PC-9 (cell line): ENCODE measurements at regions of chr20 and their contacts with region 1.

Region 1: GRCh38 chr20:36861875-36862801 is 13.8 kb upstream of the TLDC2 start:
- DNase-seq: peak; percentile 38 to 80
- H3K4me3 ChIP-seq: no peak overlapping the region; the same call in 1 of the 2 replicates
- H3K27ac ChIP-seq: no peak overlapping the region
- H3K4me1 ChIP-seq: 0 out of 2 replicates have a peak, but pooled peaks cover 12% of the 10 kb centered on the region
- H3K27me3 ChIP-seq: no peaks in the 10 kb centered on the region
- CTCF ChIP-seq: no peak

Region 2: DNA sequence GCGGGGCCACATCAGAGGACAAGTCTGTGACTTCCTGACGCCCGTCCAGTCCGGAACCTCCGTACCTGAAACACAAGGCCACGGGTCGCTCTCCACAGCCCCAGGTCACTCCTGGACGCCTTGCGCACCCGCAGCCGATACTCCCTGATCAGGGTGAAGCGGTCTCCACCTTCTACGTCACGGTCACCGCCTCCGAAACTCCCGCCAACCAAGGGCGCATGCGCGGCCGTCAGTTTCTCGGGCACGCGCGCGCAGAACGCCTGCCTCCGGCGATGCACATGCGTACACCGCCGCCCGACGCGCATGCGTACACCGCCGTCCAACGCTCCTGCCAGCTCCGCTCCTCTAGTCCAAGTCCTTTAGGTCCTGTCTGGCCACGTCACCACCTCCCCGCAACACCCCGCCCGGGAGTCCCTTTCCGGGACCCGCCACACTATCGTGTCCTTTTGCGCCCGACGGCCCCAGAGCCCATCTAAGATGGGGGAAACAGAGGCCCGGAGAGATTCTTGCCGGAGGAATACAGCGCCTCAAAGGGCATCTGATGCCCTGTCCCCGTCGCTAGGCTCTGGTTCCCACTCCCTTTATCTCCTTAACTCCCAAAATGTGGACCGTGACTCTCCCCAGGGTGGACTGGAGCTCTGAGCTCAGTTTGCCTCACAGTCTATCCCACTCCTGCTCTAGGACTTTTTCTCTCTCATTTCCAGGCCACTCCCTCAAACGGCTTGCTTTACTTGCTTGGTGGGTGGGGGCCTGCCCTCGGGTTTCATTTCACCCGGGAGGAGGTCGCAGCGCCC is 88.3 kb before region 1 on chr20 and contains the start of gene DSN1:
- CTCF ChIA-PET with region 1: interaction called, 3 read pairs
- POLR2A ChIA-PET with region 1: no interaction called
- intact Hi-C with region 1: loop called (anchors 1 kb)
- DNase-seq: peak; percentile 91 to 99
- H3K4me3 ChIP-seq: peak within 1 kb of the TSS; percentile 70
- H3K27ac ChIP-seq: peak within 1 kb of the TSS; percentile 85
- H3K4me1 ChIP-seq: peaks cover 7% of the 10 kb centered on the region
- H3K27me3 ChIP-seq: no peaks in the 10 kb centered on the region
- CTCF ChIP-seq: peak; percentile 87
- total RNA-seq, gene DSN1: 29.2 and 32.4 TPM in 2 replicates

Region 3: GRCh38 chr20:36792422-36792821 is 69.7 kb before region 1 on chr20:
- CTCF ChIA-PET with region 1: interaction called, 3 read pairs
- POLR2A ChIA-PET with region 1: no interaction called
- intact Hi-C with region 1: loop called (anchors 1 kb)
- DNase-seq: peak; percentile 85 to 87
- H3K4me3 ChIP-seq: no peak overlapping the region
- H3K27ac ChIP-seq: no peak overlapping the region
- H3K4me1 ChIP-seq: no peaks in the 10 kb centered on the region
- H3K27me3 ChIP-seq: no peaks in the 10 kb centered on the region
- CTCF ChIP-seq: peak; percentile 66

Region 4: GRCh38 chr20:36821964-36822437 is 40.1 kb before region 1 on chr20:
- CTCF ChIA-PET with region 1: interaction called, 3 read pairs
- POLR2A ChIA-PET with region 1: interaction called, 11 read pairs
- intact Hi-C with region 1: no loop called
- DNase-seq: peak; percentile 41 to 89
- H3K4me3 ChIP-seq: no peak overlapping the region
- H3K27ac ChIP-seq: no peak overlapping the region
- H3K4me1 ChIP-seq: peaks cover 47% of the 10 kb centered on the region
- H3K27me3 ChIP-seq: no peaks in the 10 kb centered on the region
- CTCF ChIP-seq: no peak

Region 5: DNA sequence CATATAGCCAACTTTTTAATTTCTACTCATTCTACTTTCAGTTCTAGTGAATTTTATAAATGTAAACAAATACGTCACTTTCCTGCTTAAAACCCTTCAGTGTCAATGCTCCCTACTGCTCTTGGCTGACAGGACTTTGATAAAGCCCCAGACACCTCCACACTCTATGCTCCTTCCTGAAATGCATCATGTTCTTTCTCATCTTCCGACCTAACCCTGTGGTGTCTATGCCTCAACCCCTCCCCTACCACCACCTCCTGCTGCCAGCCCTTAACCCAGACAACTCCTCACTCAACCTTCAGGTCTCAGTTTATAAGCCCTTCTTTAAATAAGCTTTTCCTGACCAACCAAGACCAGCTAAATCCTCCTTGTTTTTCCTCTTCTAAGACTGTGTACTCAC is 32.9 kb after region 1 on chr20:
- CTCF ChIA-PET with region 1: no interaction called
- POLR2A ChIA-PET with region 1: no interaction called
- intact Hi-C with region 1: no loop called
- DNase-seq: no peak
- H3K4me3 ChIP-seq: no peak overlapping the region
- H3K27ac ChIP-seq: no peak overlapping the region
- H3K4me1 ChIP-seq: no peaks in the 10 kb centered on the region
- H3K27me3 ChIP-seq: no peaks in the 10 kb centered on the region
- CTCF ChIP-seq: no peak

Region 6: DNA sequence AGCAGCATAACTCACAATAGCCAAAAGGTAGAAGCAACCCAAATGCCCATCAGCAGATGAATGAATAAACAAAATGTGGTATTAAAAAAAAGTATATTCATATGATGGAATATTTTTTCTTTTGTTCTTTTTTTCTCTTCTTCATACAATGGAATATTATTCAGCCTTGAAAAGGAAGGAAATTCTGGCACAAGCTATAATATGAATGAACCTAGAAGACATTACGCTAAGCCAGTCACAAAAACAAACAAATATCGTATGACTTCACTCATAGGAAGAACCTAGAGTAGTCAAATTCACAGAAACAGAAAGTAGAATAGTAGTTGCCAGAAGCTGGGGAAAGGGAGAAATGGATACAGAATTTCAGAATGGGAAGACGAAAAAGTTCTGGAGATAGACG is 169.9 kb after region 1 on chr20:
- CTCF ChIA-PET with region 1: no interaction called
- POLR2A ChIA-PET with region 1: no interaction called
- intact Hi-C with region 1: no loop called
- DNase-seq: no peak
- H3K4me3 ChIP-seq: no peak overlapping the region
- H3K27ac ChIP-seq: no peak overlapping the region
- H3K4me1 ChIP-seq: no peaks in the 10 kb centered on the region
- H3K27me3 ChIP-seq: no peaks in the 10 kb centered on the region
- CTCF ChIP-seq: no peak

Region 7: GRCh38 chr20:37308086-37309050 is 446.2 kb after region 1 on chr20:
- CTCF ChIA-PET with region 1: no interaction called
- POLR2A ChIA-PET with region 1: no interaction called
- intact Hi-C with region 1: no loop called
- DNase-seq: no peak
- H3K4me3 ChIP-seq: no peak overlapping the region
- H3K27ac ChIP-seq: no peak overlapping the region
- H3K4me1 ChIP-seq: no peaks in the 10 kb centered on the region
- H3K27me3 ChIP-seq: no peaks in the 10 kb centered on the region
- CTCF ChIP-seq: no peak